Dorsolateral prefrontal cortex (tissue), 120 donors: ENCODE measurements at regions of chr6 and their contacts with region 1.

Region 1: GRCh38 chr6:116100419-116101301 is at the start of gene NT5DC1:
- DNase-seq: peak; percentile 70 to 90 (median 76)
- H3K4me3 ChIP-seq: peak within 1 kb of the TSS; percentile 52 to 95 (median 88)
- H3K27ac ChIP-seq: peak within 1 kb of the TSS; percentile 75 to 99 (median 97)
- H3K27me3 ChIP-seq: no peaks in the 10 kb centered on the region
- CTCF ChIP-seq: peak in 49 of 56 donors; percentile 1 to 65 (median 34)
- total RNA-seq, gene NT5DC1: 19.0 to 111 (median 44.0) TPM

Region 2: GRCh38 chr6:115945306-115945705 is 155.4 kb before region 1 on chr6:
- intact Hi-C with region 1: no loop called
- DNase-seq: no peak
- H3K4me3 ChIP-seq: no peak overlapping the region
- H3K27ac ChIP-seq: no peak overlapping the region
- H3K27me3 ChIP-seq: peaks cover 0 to under 1% (median 0%) of the 10 kb centered on the region in 45 donors
- CTCF ChIP-seq: no peak

Region 3: DNA sequence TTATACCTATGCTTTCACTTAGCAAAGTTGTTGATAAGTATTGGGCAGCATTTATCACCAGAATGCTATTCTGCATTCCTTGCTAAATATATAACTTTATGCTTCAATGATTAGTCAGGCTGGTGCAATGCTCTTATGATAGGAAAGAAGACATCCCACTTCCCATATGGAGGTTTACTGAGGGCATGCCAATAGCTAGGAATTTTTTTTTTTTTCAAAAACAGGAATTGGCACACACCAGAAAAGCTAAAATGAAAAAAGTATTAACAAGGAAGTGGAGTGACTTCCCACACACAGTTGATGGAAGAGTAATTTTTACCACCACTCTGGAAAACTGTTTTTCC is 130.8 kb before region 1 on chr6:
- intact Hi-C with region 1: loop called (anchors 5 kb)
- DNase-seq: no peak
- H3K4me3 ChIP-seq: peak overlapping the region in 1 of 59 donors; percentile 2
- H3K27ac ChIP-seq: peak overlapping the region in 40 of 59 donors; percentile 1 to 98 (median 49)
- H3K27me3 ChIP-seq: no peaks in the 10 kb centered on the region
- CTCF ChIP-seq: peak in 3 of 56 donors; percentile 3 to 17 (median 9)

Region 4: GRCh38 chr6:116010790-116011401 is 89.8 kb before region 1 on chr6:
- intact Hi-C with region 1: loop called (anchors 2 to 5 kb)
- DNase-seq: peak; percentile 41 to 85 (median 68)
- H3K4me3 ChIP-seq: peak overlapping the region in 24 of 59 donors; percentile 2 to 42 (median 15)
- H3K27ac ChIP-seq: peak overlapping the region in 52 of 59 donors; percentile 12 to 97 (median 85)
- H3K27me3 ChIP-seq: no peaks in the 10 kb centered on the region
- CTCF ChIP-seq: peak; percentile 79 to 97 (median 92)

Region 5: GRCh38 chr6:116217069-116217468 is 116.4 kb after region 1 on chr6:
- intact Hi-C with region 1: loop called in 1 of 2 experiments (anchors 10 kb)
- DNase-seq: no peak
- H3K4me3 ChIP-seq: peak overlapping the region in 46 of 59 donors; percentile 2 to 56 (median 28)
- H3K27ac ChIP-seq: peak overlapping the region in 51 of 59 donors; percentile 7 to 78 (median 60)
- H3K27me3 ChIP-seq: no peaks in the 10 kb centered on the region
- CTCF ChIP-seq: peak; percentile 49 to 79 (median 67)

Region 6: DNA sequence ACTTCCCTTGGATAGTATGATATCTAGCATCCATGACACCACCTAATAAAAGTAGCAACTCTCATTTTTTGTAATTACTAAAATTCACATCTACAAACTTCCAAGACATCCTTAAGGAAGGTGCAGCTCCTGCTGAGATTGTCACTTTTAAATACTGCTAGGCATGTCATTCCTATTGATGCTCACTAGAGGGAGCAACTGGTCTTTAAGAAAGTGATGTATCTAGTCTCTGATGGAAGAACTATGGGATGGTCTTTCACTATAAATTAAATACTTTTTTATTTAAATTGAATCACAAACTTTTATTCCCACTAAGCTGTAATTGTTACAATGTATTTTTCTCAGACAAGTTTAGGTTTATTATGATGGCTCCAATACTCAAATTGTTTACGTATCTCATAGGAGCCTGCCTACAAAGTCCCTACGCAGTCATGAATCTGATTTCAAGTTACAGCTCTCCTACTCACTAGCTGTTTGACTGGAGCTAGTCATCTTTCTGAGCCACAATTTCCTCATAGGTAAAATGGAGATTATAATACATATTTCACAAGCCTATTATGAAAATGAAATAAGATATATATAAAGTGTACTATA is 187.1 kb after region 1 on chr6:
- intact Hi-C with region 1: no loop called
- DNase-seq: no peak
- H3K4me3 ChIP-seq: peak overlapping the region in 13 of 59 donors; percentile 1 to 42 (median 22)
- H3K27ac ChIP-seq: no peak overlapping the region
- H3K27me3 ChIP-seq: no peaks in the 10 kb centered on the region
- CTCF ChIP-seq: peak; percentile 79 to 99 (median 91)

Region 7: GRCh38 chr6:116595247-116595646 is 494.6 kb after region 1 on chr6:
- intact Hi-C with region 1: no loop called
- DNase-seq: no peak
- H3K4me3 ChIP-seq: no peak overlapping the region
- H3K27ac ChIP-seq: no peak overlapping the region
- H3K27me3 ChIP-seq: no peaks in the 10 kb centered on the region
- CTCF ChIP-seq: no peak